Esophagus muscularis mucosa (tissue), 4 donors: ENCODE measurements at regions of chr4 and their contacts with region 1.

Region 1: GRCh38 chr4:128863312-128864075 is 54.0 kb downstream of the JADE1 start:
- DNase-seq: no peak
- H3K4me3 ChIP-seq: no peak overlapping the region
- H3K27ac ChIP-seq: peak overlapping the region in 2 of 4 donors; percentile 10 to 21
- H3K4me1 ChIP-seq: peaks cover 22 to 46% (median 39%) of the 10 kb centered on the region in 4 donors
- H3K27me3 ChIP-seq: no peaks in the 10 kb centered on the region
- CTCF ChIP-seq: peak; percentile 80 to 88 (median 83)
- EP300 ChIP-seq: no peak
- POLR2A ChIP-seq: no peak

Region 2: GRCh38 chr4:128191115-128191781 is 672.2 kb before region 1 on chr4:
- intact Hi-C with region 1: loop called (anchors 5 kb)
- DNase-seq: no peak
- H3K4me3 ChIP-seq: no peak overlapping the region
- H3K27ac ChIP-seq: no peak overlapping the region
- H3K4me1 ChIP-seq: peaks cover 0 to 11% (median 5%) of the 10 kb centered on the region in 4 donors
- H3K27me3 ChIP-seq: no peaks in the 10 kb centered on the region
- CTCF ChIP-seq: peak; percentile 78 to 89 (median 86)
- EP300 ChIP-seq: no peak
- POLR2A ChIP-seq: no peak

Region 3: DNA sequence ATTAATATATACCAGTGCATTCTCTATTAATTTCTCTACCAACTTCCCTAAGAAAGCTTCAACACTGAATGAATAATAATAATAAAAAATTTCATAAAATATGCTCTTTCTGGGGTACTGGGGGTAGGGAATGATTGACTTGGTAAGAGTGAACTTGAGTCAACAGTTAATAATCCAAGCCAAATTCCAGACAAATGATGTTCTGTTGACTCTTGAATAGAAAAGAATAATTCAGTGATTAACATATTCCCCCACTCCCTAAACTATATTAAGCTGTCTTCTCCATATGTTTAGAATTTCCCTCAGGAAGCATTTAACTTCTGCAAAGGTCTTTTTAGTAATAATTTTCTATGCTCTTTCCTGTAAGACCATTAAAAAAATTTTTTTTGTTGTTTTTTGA is 588.1 kb before region 1 on chr4:
- intact Hi-C with region 1: loop called (anchors 5 kb)
- DNase-seq: no peak
- H3K4me3 ChIP-seq: no peak overlapping the region
- H3K27ac ChIP-seq: no peak overlapping the region
- H3K4me1 ChIP-seq: peaks cover 0 to 23% (median 18%) of the 10 kb centered on the region in 4 donors
- H3K27me3 ChIP-seq: no peaks in the 10 kb centered on the region
- CTCF ChIP-seq: no peak
- EP300 ChIP-seq: no peak
- POLR2A ChIP-seq: no peak

Region 4: DNA sequence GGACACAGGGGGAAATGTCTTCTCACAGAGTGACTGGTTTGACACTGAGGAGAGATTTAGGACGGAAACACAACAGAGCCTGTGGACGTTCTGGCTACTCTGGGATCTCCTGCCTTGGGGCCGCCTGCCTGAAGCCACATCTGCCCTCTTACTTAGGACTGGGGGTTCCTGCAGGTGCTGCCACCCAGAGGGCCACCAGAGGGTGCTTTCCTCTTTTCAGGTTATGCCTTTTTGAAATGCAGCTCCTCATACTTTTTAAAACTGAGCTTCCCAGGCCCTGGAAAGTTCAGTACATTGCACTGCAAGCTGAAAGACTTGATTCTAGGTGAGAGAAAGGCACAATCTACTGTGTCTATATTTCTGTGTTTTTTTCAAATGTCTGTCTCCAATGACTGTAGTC is 483.6 kb before region 1 on chr4:
- intact Hi-C with region 1: loop called (anchors 5 kb)
- DNase-seq: peak; percentile 89
- H3K4me3 ChIP-seq: no peak overlapping the region
- H3K27ac ChIP-seq: no peak overlapping the region
- H3K4me1 ChIP-seq: peaks cover 9 to 23% (median 17%) of the 10 kb centered on the region in 4 donors
- H3K27me3 ChIP-seq: no peaks in the 10 kb centered on the region
- CTCF ChIP-seq: peak; percentile 52 to 70 (median 55)
- EP300 ChIP-seq: no peak
- POLR2A ChIP-seq: no peak

Region 5: DNA sequence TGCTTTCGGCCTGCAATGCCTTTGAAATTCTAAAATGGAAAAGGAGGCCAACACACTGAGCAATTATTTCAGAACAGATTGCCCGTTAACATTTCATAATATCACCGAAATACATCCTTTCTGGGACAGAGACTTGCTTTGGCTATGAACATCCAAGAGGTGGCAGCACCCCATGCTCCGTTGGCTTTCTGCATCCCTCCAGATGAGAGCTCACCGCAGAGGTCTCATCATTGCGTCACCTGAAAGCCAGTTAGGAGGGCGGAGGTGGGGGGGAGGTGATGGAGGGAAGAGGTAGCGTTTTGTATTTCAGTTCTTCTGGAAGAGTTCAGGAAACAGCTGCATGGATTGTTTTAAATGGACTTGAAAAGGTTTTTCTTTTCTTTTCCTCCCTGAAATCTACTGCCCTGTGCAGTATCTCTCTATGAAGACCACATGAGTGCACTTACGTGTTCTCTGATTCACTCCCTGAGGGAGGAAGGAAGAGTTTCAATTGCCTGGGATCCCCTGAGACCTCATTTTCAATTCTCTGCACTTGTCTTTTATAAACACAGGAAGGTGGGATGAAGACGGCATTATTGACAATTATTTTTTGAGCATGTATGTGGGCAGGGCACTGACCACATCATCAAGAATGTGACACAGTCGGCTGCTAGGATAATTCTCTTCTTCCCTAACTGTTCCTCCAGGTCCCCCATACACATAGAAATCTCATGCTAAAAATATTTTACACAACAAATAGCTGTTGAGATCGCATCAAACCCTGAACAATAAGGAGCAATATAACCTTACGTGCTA is 409.0 kb before region 1 on chr4:
- intact Hi-C with region 1: loop called (anchors 2 kb)
- DNase-seq: peak; percentile 94
- H3K4me3 ChIP-seq: no peak overlapping the region
- H3K27ac ChIP-seq: peak overlapping the region in 2 of 4 donors; percentile 13 to 28
- H3K4me1 ChIP-seq: peaks cover 11 to 25% (median 18%) of the 10 kb centered on the region in 4 donors
- H3K27me3 ChIP-seq: no peaks in the 10 kb centered on the region
- CTCF ChIP-seq: peak; percentile 77 to 83 (median 82)
- EP300 ChIP-seq: no peak
- POLR2A ChIP-seq: no peak

Region 6: DNA sequence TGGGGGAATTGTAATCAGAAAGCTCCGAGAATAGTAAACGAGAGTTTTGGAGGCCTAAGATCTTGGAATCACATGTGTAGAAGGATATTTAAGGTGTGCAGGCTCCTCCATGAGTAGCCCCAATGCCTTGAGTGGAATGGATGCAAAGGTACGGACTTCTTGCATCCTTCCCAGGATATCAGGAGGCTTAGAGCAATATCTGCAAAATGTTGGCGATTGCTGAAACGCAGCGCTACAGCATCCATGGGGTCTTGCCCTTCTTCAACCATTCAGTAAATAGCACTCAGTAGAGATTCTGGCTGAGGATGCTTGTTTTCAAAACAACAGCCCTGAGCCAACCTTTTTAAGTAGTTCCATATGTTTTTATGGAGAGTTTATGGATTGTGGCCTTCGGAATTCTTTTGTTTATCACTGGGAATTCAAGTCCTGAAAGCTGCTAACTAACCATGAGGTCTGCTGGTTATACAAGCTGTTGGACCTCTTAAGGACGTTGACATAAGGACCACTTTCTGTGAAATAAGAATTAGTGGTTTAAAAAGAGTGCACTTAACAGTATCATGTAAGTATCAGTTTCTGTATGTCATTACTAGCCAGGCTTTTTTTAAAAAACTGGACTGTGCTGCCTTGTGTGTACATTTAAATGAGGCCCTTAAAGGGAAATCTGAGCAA is 347.1 kb before region 1 on chr4:
- intact Hi-C with region 1: no loop called
- DNase-seq: no peak
- H3K4me3 ChIP-seq: no peak overlapping the region
- H3K27ac ChIP-seq: no peak overlapping the region
- H3K4me1 ChIP-seq: peaks cover 10 to 19% (median 16%) of the 10 kb centered on the region in 4 donors
- H3K27me3 ChIP-seq: no peaks in the 10 kb centered on the region
- CTCF ChIP-seq: no peak
- EP300 ChIP-seq: no peak
- POLR2A ChIP-seq: no peak

Region 7: GRCh38 chr4:128565565-128566186 is 297.8 kb before region 1 on chr4:
- intact Hi-C with region 1: loop called (anchors 5 kb)
- DNase-seq: no peak
- H3K4me3 ChIP-seq: no peak overlapping the region
- H3K27ac ChIP-seq: no peak overlapping the region
- H3K4me1 ChIP-seq: peaks cover 3 to 23% (median 21%) of the 10 kb centered on the region in 4 donors
- H3K27me3 ChIP-seq: no peaks in the 10 kb centered on the region
- CTCF ChIP-seq: peak; percentile 63 to 71 (median 65)
- EP300 ChIP-seq: no peak
- POLR2A ChIP-seq: no peak

Region 8: GRCh38 chr4:128737098-128737513 is 126.4 kb before region 1 on chr4:
- intact Hi-C with region 1: no loop called
- DNase-seq: no peak
- H3K4me3 ChIP-seq: no peak overlapping the region
- H3K27ac ChIP-seq: no peak overlapping the region
- H3K4me1 ChIP-seq: peaks cover 0 to 5% (median 2%) of the 10 kb centered on the region in 4 donors
- H3K27me3 ChIP-seq: no peaks in the 10 kb centered on the region
- CTCF ChIP-seq: no peak
- EP300 ChIP-seq: no peak
- POLR2A ChIP-seq: no peak

Region 9: DNA sequence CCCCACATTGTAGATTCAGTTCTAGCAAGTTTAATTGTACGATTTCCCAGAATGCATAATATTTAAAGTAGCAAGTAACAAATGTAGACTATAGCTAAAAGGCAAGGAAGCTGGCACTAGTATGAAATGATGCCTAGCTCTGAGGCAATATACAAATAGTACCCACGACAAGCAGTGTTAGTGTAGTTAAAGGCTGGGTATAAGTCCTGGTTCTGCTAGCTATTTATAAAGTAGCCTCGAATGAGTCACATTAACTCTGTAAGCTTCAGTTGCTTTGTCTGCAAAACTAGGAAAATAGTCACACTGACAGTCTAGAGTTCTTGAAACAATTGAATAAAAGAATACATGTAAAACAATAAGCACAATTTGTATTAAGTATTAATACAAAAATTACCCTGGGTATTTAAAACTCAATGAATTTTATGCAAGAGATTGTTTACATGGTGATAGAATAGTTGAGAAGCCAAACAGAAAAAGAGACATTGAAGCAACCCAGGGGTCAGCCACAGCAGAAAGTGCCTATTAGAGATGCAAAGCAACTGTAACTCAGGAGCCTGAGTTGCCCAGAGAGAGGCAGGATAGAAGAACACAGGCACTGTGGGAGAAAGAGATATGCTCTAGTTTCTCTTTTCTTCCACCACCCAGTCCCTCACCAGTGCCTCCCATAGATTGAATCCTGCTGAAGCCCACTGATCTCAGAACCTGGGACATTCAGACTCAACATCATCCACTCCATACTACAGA is 1181.5 kb after region 1 on chr4:
- intact Hi-C with region 1: no loop called
- DNase-seq: no peak
- H3K4me3 ChIP-seq: no peak overlapping the region
- H3K27ac ChIP-seq: no peak overlapping the region
- H3K4me1 ChIP-seq: no peaks in the 10 kb centered on the region
- H3K27me3 ChIP-seq: no peaks in the 10 kb centered on the region
- CTCF ChIP-seq: no peak
- EP300 ChIP-seq: no peak
- POLR2A ChIP-seq: no peak